Left lung (tissue), 14 donors: ENCODE measurements at regions of chr17 and their contacts with region 1.

Region 1: GRCh38 chr17:74354123-74354522 is 7.5 kb downstream of the BTBD17 start:
- DNase-seq: no peak
- ATAC-seq: peak; percentile 71
- H3K4me3 ChIP-seq: no peak overlapping the region
- H3K27ac ChIP-seq: no peak overlapping the region
- H3K4me1 ChIP-seq: peaks cover 0 to 9% of the 10 kb centered on the region in 2 donors
- H3K27me3 ChIP-seq: peaks cover 67 to 100% of the 10 kb centered on the region in 2 donors
- CTCF ChIP-seq: peak; percentile 24 to 32

Region 2: DNA sequence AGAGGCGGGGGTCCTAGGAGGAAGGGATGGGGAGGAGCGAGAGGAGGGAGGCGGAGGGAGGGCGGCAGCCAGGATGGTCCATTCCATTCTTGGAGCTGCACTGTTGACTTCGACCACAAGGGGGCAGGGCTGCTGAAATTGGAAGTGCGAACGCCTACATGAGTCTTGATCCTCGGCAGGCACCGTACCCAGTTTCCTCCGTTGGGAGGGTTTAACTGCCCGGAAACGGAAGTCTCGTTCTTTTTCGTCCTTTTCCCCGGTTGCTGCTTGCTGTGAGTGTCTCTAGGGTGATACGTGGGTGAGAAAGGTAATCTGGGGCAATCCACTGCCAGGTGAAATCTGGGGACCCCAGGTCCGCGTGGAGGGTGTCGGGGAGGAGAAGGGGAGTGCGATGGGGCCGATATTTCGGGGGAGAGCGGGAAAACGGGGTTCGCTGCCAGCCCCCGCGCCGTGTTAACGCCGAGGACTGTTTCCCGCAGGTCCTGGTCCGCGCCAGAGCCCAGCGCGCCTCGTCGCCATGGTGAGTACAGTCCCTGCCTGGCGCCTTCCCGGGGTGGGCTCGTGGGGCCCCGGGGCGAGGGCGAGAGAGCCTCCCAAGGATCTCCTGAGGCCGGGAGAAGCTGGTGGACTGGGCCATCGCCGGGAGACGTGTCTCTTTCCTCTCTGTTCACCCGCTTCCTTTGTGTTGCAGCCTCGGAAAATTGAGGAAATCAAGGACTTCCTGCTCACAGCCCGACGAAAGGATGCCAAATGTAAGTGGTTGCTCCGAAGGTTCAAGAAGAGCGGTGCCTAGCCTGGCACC is 150.5 kb before region 1 on chr17 and contains the start of gene RPL38:
- intact Hi-C with region 1: loop called in 1 of 2 experiments (anchors 10 kb)
- DNase-seq: peak; percentile 91 to 96 (median 94)
- ATAC-seq: peak; percentile 95
- H3K4me3 ChIP-seq: peak within 1 kb of the TSS; percentile 57 to 85
- H3K27ac ChIP-seq: peak within 1 kb of the TSS; percentile 47 to 83
- H3K4me1 ChIP-seq: peaks cover 18 to 48% of the 10 kb centered on the region in 2 donors
- H3K27me3 ChIP-seq: peaks cover 0 to 33% of the 10 kb centered on the region in 2 donors
- CTCF ChIP-seq: peak; percentile 81 to 93
- polyA plus RNA-seq, gene RPL38: 1,256 to 1,464 (median 1,346) TPM

Region 3: GRCh38 chr17:74305865-74306654 is 48.1 kb before region 1 on chr17:
- intact Hi-C with region 1: loop called in 1 of 2 experiments (anchors 10 kb)
- DNase-seq: no peak
- ATAC-seq: no peak
- H3K4me3 ChIP-seq: no peak overlapping the region
- H3K27ac ChIP-seq: no peak overlapping the region
- H3K4me1 ChIP-seq: peaks cover 0 to 3% of the 10 kb centered on the region in 2 donors
- H3K27me3 ChIP-seq: peaks cover 0 to 32% of the 10 kb centered on the region in 2 donors
- CTCF ChIP-seq: no peak